ENCODE measurements at regions of chr10 and their contacts with region 1.

Region 1: DNA sequence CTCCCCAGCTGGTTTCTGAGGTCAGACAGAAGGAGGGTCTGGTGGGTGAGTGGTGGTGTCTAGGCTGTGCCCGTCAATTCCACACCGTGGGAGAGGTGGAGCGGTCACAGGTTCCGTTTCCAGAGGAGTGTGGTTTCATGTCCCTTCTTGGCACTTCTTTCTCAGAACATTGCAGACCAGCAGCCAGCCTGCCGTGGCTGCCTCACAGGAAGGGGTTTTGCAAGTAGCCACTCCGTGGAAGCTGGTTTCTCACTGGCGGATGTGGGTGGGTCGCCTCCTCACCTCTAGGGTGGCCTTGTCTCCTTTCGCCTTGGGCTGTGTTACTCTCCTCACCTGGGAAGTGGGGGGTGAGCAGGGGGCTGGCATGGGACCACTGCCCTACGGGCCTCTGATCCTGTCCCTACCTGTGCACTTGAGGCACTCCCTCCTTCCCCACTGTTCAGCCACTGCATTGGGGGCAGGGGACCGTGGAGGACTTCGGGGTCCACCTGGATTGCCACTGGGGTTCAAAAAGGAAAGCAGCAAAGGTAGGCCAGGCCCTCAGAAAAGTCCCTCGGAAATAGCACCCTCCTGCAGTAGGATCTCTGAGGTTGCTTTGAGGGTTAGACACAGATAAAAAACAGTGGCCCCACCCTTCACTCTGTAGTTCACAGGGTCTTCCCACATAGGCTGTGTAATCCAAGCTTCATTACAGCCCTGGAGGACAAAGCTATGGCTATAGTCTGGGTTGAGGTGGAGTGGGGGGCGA is 33.9 kb downstream of the TSPAN14 start:
- DNase-seq: peak in 8 of 9 donors; percentile 48 to 63 (median 54)
- ATAC-seq: peak; percentile 78
- H3K4me3 ChIP-seq: peak overlapping the region; percentile 49
- H3K4me3 Mint-ChIP-seq: peak overlapping the region; percentile 64 to 88 (median 80)
- H3K27ac ChIP-seq: peak overlapping the region; percentile 74
- H3K27ac Mint-ChIP-seq: peak overlapping the region; percentile 74 to 99 (median 88)
- H3K4me1 ChIP-seq: peaks cover 93 to 98% of the 10 kb centered on the region in 2 donors
- H3K4me1 Mint-ChIP-seq: peaks cover 83 to 100% (median 93%) of the 10 kb centered on the region in 7 donors
- H3K27me3 ChIP-seq: no peaks in the 10 kb centered on the region
- H3K27me3 Mint-ChIP-seq: no peaks in the 10 kb centered on the region

Region 2: DNA sequence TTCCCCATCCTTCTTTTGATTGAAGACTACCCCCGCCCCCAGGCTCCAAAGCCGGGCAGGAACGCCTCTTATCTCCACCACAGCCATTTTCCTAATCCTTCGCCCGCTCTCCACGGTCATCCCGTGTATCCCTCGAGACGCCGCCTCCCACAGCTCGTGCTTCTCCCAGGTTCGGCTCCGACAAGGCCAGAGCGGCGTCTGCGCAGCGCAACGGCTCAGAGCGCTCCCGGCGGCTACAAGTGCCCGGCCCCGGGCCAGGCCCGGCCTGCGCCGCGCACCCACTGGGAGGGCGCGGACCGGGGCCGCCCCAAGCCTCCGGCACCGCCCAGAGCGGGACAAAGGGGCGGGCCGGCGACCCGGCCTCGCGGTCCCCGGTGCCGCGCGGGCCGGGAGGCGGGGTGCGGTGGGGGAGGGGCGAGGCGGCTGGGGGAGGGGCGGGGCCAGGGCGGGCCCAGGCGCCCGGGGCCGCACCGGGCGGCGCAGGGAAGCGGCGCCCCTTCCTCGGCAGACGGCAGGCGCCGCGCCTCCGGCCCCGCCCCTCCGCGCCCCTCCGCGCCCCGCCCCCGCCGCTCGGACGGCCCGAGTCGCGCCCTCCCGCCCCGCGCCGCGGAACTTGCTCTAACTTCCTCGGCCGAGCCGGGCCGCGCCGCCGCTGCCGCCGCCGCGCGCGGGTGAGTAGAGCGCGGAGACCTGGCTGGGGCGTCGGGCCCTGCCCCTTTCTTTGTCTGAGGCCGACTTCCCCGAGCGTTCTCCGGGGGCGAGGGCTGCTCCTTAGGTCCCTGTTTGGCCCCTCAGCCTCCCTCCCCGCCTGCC is 34.1 kb before region 1 on chr10 and contains the start of gene TSPAN14:
- CTCF ChIA-PET with region 1: interaction called, 13 read pairs
- POLR2A ChIA-PET with region 1: interaction called, 608 read pairs
- intact Hi-C with region 1: loop called (anchors 1 to 2 kb)
- DNase-seq: peak; percentile 49 to 83 (median 63)
- ATAC-seq: peak; percentile 84
- H3K4me3 ChIP-seq: peak within 1 kb of the TSS; percentile 87
- H3K4me3 Mint-ChIP-seq: peak within 1 kb of the TSS; percentile 79 to 99 (median 98)
- H3K27ac ChIP-seq: peak within 1 kb of the TSS; percentile 84
- H3K27ac Mint-ChIP-seq: peak within 1 kb of the TSS; percentile 87 to 99 (median 98)
- H3K4me1 ChIP-seq: peaks cover 23 to 27% of the 10 kb centered on the region in 2 donors
- H3K4me1 Mint-ChIP-seq: peaks cover 26 to 43% (median 38%) of the 10 kb centered on the region in 7 donors
- H3K27me3 ChIP-seq: no peaks in the 10 kb centered on the region
- H3K27me3 Mint-ChIP-seq: no peaks in the 10 kb centered on the region
- total RNA-seq, gene TSPAN14: 135 to 165 (median 160) TPM

Region 3: GRCh38 chr10:80459047-80459931 is 28.7 kb before region 1 on chr10:
- CTCF ChIA-PET with region 1: interaction called, 13 read pairs
- POLR2A ChIA-PET with region 1: interaction called, 608 read pairs
- intact Hi-C with region 1: loop called (anchors 1 to 2 kb)
- DNase-seq: peak in 7 of 9 donors; percentile 53 to 66 (median 55)
- ATAC-seq: peak; percentile 66
- H3K4me3 ChIP-seq: peak overlapping the region; percentile 87
- H3K4me3 Mint-ChIP-seq: peak overlapping the region; percentile 79 to 99 (median 98)
- H3K27ac ChIP-seq: peak overlapping the region; percentile 84
- H3K27ac Mint-ChIP-seq: peak overlapping the region; percentile 87 to 99 (median 98)
- H3K4me1 ChIP-seq: peaks cover 75 to 79% of the 10 kb centered on the region in 2 donors
- H3K4me1 Mint-ChIP-seq: peaks cover 77 to 85% (median 83%) of the 10 kb centered on the region in 7 donors
- H3K27me3 ChIP-seq: no peaks in the 10 kb centered on the region
- H3K27me3 Mint-ChIP-seq: no peaks in the 10 kb centered on the region

Region 4: DNA sequence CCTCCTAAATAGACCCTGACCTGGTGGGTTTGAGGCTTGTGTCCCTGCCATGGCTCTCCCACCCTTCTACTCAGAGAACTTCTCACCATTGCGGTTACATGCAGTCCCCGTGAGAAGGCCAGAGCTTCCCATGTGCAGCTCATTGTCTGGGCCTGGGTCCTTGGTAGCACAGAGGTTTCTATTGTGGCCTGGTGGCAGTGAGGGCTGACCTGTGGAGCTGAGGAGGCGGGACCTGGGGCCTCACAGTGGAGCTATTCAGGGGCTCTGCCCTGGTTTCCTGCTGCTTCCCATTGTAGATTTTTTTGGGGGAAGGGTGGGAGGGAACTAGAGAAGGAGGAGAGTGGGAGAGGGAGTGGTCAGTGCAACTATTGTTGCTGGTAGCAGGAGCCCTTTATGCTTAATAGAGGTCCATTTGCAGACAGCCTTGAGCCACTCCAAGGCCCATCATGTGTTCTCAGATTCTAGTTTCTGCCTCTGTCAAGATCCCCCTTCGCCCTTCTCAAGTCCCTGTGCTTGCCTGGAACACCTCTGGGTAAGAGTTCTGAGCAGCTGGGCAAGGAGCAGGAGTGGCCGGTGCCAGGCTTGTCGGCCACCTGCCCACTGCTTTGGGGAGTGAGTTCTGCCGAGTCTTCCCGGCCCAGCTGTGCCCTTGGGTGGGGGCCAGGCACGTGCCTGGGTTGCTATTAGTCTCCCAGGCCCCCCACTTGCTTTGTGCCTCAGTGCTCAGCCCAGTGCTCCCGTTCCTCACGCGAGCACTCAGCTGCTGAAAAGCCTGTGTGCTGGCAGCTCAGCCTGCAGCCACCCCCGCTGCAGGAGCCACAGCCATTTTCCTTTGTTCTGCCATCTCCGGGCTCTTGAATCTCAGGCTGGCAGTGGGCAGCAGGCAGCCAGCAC is 23.2 kb before region 1 on chr10:
- CTCF ChIA-PET with region 1: interaction called, 40 read pairs
- POLR2A ChIA-PET with region 1: interaction called, 608 read pairs
- intact Hi-C with region 1: loop called (anchors 1 kb)
- DNase-seq: peak in 2 of 9 donors; percentile 46 to 47
- ATAC-seq: peak; percentile 11
- H3K4me3 ChIP-seq: peak overlapping the region; percentile 57
- H3K4me3 Mint-ChIP-seq: peak overlapping the region; percentile 79 to 99 (median 88)
- H3K27ac ChIP-seq: peak overlapping the region; percentile 84
- H3K27ac Mint-ChIP-seq: peak overlapping the region; percentile 87 to 99 (median 98)
- H3K4me1 ChIP-seq: peaks cover 88 to 97% of the 10 kb centered on the region in 2 donors
- H3K4me1 Mint-ChIP-seq: peaks cover 75 to 100% (median 95%) of the 10 kb centered on the region in 7 donors
- H3K27me3 ChIP-seq: no peaks in the 10 kb centered on the region
- H3K27me3 Mint-ChIP-seq: no peaks in the 10 kb centered on the region

Region 5: GRCh38 chr10:80472234-80473095 is 15.5 kb before region 1 on chr10:
- CTCF ChIA-PET with region 1: interaction called, 40 read pairs
- POLR2A ChIA-PET with region 1: interaction called, 608 read pairs
- intact Hi-C with region 1: loop called (anchors 1 kb)
- DNase-seq: peak in 1 of 9 donors; percentile 47
- ATAC-seq: peak; percentile 75
- H3K4me3 ChIP-seq: peak overlapping the region; percentile 46
- H3K4me3 Mint-ChIP-seq: peak overlapping the region; percentile 69 to 98 (median 84)
- H3K27ac ChIP-seq: peak overlapping the region; percentile 84
- H3K27ac Mint-ChIP-seq: peak overlapping the region; percentile 84 to 99 (median 92)
- H3K4me1 ChIP-seq: peaks cover 79 to 81% of the 10 kb centered on the region in 2 donors
- H3K4me1 Mint-ChIP-seq: peaks cover 64 to 98% (median 88%) of the 10 kb centered on the region in 7 donors
- H3K27me3 ChIP-seq: no peaks in the 10 kb centered on the region
- H3K27me3 Mint-ChIP-seq: no peaks in the 10 kb centered on the region

Region 6: GRCh38 chr10:80477813-80478212 is 10.2 kb before region 1 on chr10:
- CTCF ChIA-PET with region 1: interaction called, 9 read pairs
- POLR2A ChIA-PET with region 1: interaction called, 608 read pairs
- intact Hi-C with region 1: loop called (anchors 1 to 2 kb)
- DNase-seq: no peak
- ATAC-seq: peak; percentile 50
- H3K4me3 ChIP-seq: no peak overlapping the region
- H3K4me3 Mint-ChIP-seq: peak overlapping the region in 7 of 10 donors; percentile 0 to 57 (median 26)
- H3K27ac ChIP-seq: peak overlapping the region; percentile 18
- H3K27ac Mint-ChIP-seq: peak overlapping the region; percentile 26 to 99 (median 81)
- H3K4me1 ChIP-seq: peaks cover 44 to 64% of the 10 kb centered on the region in 2 donors
- H3K4me1 Mint-ChIP-seq: peaks cover 49 to 87% (median 76%) of the 10 kb centered on the region in 7 donors
- H3K27me3 ChIP-seq: no peaks in the 10 kb centered on the region
- H3K27me3 Mint-ChIP-seq: no peaks in the 10 kb centered on the region

Region 7: DNA sequence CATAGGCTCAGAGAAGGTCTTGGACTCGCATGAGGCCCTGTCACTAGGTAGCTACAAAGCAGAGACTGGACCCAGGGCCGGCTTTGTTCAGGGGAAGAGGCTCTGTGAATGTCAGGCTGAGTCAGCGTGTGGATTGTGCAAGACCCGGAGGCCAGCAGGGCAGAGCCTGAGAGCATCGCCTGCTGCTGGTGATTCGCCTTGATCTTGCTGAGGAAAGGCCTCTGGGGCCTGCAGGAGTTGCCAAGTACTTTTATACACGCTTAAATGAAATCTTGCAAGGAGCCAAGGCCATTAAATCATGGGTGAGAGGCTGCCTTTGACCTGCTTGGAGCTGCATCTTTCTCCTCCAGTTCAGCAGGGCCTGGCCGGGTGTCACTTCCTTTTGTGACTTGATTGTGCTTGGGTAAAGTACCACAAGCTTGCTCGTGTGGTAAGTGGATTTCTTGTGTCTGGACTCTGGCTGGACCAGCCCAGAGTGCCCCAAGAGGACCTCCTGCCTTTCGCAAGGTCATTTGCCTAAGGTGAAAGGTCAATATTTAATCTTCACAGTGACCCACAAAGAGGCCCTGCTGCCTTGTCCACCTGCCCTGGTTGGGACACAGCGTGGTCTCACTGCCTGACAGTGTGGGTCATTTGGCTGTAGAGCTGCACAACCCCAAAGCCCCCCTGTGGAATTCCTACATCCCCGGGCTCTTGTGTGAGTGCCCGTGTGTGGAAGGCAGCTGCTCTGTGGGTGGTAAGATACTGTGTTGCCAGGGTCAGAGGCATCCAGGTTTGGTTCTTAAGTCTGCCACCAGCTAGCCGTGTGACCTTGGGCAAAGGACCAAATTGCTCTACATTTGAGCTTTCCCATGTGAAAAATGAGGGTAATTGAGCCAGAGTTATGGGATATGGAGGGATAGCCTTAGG is 11.1 kb after region 1 on chr10:
- CTCF ChIA-PET with region 1: interaction called, 17 read pairs
- POLR2A ChIA-PET with region 1: interaction called, 182 read pairs
- intact Hi-C with region 1: loop called (anchors 1 kb)
- DNase-seq: peak in 2 of 9 donors; percentile 32 to 61
- ATAC-seq: peak; percentile 73
- H3K4me3 ChIP-seq: peak overlapping the region; percentile 33
- H3K4me3 Mint-ChIP-seq: peak overlapping the region; percentile 76 to 92 (median 82)
- H3K27ac ChIP-seq: peak overlapping the region; percentile 59
- H3K27ac Mint-ChIP-seq: peak overlapping the region; percentile 85 to 99 (median 90)
- H3K4me1 ChIP-seq: peaks cover 93 to 99% of the 10 kb centered on the region in 2 donors
- H3K4me1 Mint-ChIP-seq: peaks cover 89 to 100% (median 98%) of the 10 kb centered on the region in 7 donors
- H3K27me3 ChIP-seq: no peaks in the 10 kb centered on the region
- H3K27me3 Mint-ChIP-seq: no peaks in the 10 kb centered on the region

Measured in naive thymus-derived CD4-positive, alpha-beta T cell (primary cell).